B cell (primary cell): ENCODE measurements at regions of chrX and their contacts with region 1.

Region 1: DNA sequence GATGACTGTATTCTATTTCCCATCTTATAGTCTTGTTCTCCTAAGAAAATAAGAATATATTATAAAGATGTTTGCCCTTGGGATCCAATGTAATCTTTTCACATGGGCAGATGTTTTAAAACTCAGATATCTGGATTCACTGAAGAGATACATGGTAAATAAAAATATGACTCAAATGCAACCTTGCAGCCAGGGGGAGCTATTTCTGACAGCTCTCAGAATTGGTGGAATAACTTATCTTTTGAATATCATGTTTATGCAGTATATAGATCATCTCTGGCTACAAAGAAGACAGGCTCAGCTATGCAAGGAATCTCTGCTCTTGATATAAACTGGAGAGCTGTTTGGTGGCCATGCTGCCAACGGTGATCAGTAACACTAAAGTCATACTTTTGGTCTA is 274.7 kb downstream of the GLUD2 start:
- DNase-seq: no peak
- ATAC-seq: no peak
- H3K4me3 ChIP-seq: no peak overlapping the region
- H3K4me3 Mint-ChIP-seq: no peak overlapping the region
- H3K27ac ChIP-seq: no peak overlapping the region
- H3K27ac Mint-ChIP-seq: no peak overlapping the region
- H3K4me1 ChIP-seq: no peaks in the 10 kb centered on the region
- H3K4me1 Mint-ChIP-seq: no peaks in the 10 kb centered on the region
- H3K27me3 ChIP-seq: no peaks in the 10 kb centered on the region
- H3K27me3 Mint-ChIP-seq: peaks cover 4% of the 10 kb centered on the region
- CTCF ChIP-seq: no peak

Region 2: DNA sequence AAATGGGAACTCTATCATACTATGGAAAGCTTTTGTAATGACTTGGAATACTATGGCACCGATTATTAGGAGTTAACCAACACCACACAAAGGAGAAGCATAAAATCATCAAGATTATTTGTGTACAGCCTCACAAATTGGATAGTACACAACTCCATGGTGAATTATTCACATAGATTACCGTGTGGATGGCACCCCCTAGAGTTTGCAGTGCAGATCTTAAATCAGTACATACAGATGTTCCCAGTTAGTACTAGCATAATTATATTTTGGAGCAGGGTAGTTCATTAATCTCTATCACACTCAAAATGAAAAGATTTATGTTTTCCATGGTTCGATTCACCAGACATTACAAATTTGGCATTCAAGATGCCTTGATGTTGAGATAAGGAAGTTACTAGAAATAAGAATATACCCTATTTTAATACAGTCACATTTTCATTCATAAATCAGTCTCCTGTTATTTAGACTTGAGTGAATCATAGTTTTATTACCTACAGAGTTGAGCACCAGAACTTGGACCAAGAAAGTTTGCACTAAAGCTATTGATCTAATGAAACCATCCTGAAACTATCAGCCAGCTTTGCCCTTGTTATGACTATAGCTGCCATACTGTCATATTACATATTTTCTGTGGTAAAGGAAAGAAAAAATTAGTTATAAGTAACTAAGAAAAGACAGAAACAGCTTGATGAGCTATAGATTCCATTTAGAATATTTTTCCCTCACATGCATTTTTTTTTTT is 257.0 kb after region 1 on chrX:
- CTCF ChIA-PET with region 1: interaction called, 3 read pairs
- POLR2A ChIA-PET with region 1: no interaction called
- intact Hi-C with region 1: loop called (anchors 5 kb)
- DNase-seq: peak; percentile 9
- ATAC-seq: no peak
- H3K4me3 ChIP-seq: no peak overlapping the region
- H3K4me3 Mint-ChIP-seq: no peak overlapping the region
- H3K27ac ChIP-seq: no peak overlapping the region
- H3K27ac Mint-ChIP-seq: no peak overlapping the region
- H3K4me1 ChIP-seq: no peaks in the 10 kb centered on the region
- H3K4me1 Mint-ChIP-seq: no peaks in the 10 kb centered on the region
- H3K27me3 ChIP-seq: no peaks in the 10 kb centered on the region
- H3K27me3 Mint-ChIP-seq: no peaks in the 10 kb centered on the region
- CTCF ChIP-seq: peak; percentile 24

Region 3: DNA sequence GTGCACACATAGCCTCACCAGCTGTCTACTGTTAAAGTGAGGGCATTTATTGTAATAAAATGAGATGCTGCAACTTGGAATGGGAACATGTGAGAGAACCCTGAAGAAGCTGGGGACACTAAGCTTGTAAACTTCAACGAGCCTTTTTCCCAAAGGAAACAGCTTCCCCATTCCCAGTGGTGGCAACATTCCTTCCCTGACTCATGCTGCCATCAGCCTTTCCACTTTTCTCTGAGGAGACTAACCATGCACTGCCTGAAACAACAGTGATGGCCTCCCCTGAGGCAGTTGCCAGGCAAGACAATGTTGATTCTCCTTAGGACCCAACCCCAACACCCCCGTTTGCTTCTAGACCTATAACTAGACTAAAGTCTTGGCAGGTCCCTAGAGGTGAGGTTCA is 653.5 kb after region 1 on chrX:
- CTCF ChIA-PET with region 1: no interaction called
- POLR2A ChIA-PET with region 1: no interaction called
- intact Hi-C with region 1: no loop called
- DNase-seq: no peak
- ATAC-seq: no peak
- H3K4me3 ChIP-seq: no peak overlapping the region
- H3K4me3 Mint-ChIP-seq: no peak overlapping the region
- H3K27ac ChIP-seq: no peak overlapping the region
- H3K27ac Mint-ChIP-seq: no peak overlapping the region
- H3K4me1 ChIP-seq: no peaks in the 10 kb centered on the region
- H3K4me1 Mint-ChIP-seq: no peaks in the 10 kb centered on the region
- H3K27me3 ChIP-seq: no peaks in the 10 kb centered on the region
- H3K27me3 Mint-ChIP-seq: no peaks in the 10 kb centered on the region
- CTCF ChIP-seq: no peak